H1 (cell line): ENCODE measurements at regions of chr15 and their contacts with region 1.

Region 1: DNA sequence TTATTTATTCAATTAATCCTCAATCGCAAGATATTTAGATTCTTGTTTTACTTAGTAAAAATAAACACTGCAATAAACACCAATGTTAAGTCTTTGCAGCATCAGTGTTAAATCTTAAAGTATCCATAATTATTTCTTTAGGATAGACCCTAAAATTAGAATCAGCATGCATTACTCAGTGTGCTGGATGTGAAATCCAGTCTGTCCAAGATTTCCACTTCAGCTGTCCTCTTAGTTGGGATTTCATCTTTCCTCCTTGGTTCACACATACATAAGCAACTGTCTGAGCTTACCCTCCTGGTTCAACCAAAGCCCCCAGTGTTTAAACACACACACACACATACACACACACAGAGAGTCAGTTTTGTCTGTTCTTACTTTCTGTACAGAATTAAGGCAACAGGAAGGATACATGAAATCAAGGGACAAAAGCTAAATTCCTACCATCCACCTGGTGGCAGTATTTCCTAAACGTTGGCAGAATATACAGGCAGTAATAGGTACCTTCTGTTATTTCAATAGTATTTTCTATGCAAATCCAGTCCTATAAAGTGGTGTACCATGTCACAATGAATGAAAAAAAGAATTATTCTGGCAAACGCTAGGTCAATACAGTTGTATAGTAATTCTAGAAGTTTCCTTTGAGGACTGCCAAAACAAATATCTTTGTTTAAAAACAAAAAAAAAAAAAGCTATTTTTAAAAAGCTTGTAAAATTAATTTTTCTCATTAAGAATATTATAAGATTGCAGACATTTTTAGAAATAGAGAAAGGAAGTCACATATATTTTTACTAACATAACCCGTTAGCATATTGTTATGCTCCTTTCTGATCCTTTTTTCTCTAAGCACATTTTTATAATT is 27.3 kb upstream of the DMXL2 start:
- DNase-seq: no peak
- H3K4me3 ChIP-seq: no peak overlapping the region
- H3K27ac ChIP-seq: no peak overlapping the region
- H3K4me1 ChIP-seq: no peaks in the 10 kb centered on the region
- H3K27me3 ChIP-seq: no peaks in the 10 kb centered on the region
- CTCF ChIP-seq: peak in 2 of 3 experiments; percentile 70 to 75; a peak in 3 of 4 replicates
- EP300 ChIP-seq: no peak
- POLR2A ChIP-seq: no peak
- RAD21 ChIP-seq: peak; percentile 93 to 95

Region 2: DNA sequence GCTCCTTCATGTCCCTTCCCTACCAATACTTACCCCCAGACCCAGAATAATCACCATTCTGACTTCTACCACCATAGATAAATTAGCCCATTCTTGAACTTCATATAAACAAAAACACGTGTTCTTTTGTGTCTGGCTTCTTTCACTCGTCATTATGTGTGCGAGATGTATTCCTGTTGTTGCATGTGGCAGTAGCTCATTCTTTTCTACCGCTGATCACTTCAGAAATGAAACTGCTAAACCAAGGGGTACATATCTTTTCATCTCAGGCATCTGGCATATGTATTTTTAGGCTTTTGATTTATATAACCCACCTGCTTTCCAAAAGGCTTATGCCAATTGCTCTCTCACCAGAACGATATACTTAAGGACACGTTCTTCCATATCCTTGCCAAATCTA is 17.6 kb after region 1 on chr15:
- CTCF ChIA-PET with region 1: interaction called, 15 read pairs
- POLR2A ChIA-PET with region 1: no interaction called
- DNase-seq: no peak
- H3K4me3 ChIP-seq: no peak overlapping the region
- H3K27ac ChIP-seq: no peak overlapping the region
- H3K4me1 ChIP-seq: peaks cover 0 to 3% (median 0%) of the 10 kb centered on the region in 4 experiments; a peak in 1 of 7 replicates
- H3K27me3 ChIP-seq: no peaks in the 10 kb centered on the region
- CTCF ChIP-seq: no peak
- EP300 ChIP-seq: no peak
- POLR2A ChIP-seq: no peak
- RAD21 ChIP-seq: no peak

Region 3: GRCh38 chr15:51681303-51681963 is 31.5 kb after region 1 on chr15 and contains the start of gene SCG3:
- CTCF ChIA-PET with region 1: interaction called, 15 read pairs
- POLR2A ChIA-PET with region 1: no interaction called
- DNase-seq: peak; percentile 94 to 99
- H3K4me3 ChIP-seq: peak within 1 kb of the TSS; percentile 59 to 91 (median 80)
- H3K27ac ChIP-seq: 0 out of 2 replicates have a peak within 1 kb of the TSS, but pooled peaks have one; percentile 55
- H3K4me1 ChIP-seq: no peaks in the 10 kb centered on the region
- H3K27me3 ChIP-seq: no peaks in the 10 kb centered on the region
- CTCF ChIP-seq: no peak
- EP300 ChIP-seq: 0 out of 3 replicates have a peak, but pooled peaks of 1 of the 2 experiments have one; percentile 50
- POLR2A ChIP-seq: peak; percentile 50 to 85
- RAD21 ChIP-seq: peak in 1 of 2 experiments; percentile 1; a peak in 2 of 4 replicates
- total RNA-seq, gene SCG3: 42.4 and 45.9 TPM in 2 replicates

Region 4: DNA sequence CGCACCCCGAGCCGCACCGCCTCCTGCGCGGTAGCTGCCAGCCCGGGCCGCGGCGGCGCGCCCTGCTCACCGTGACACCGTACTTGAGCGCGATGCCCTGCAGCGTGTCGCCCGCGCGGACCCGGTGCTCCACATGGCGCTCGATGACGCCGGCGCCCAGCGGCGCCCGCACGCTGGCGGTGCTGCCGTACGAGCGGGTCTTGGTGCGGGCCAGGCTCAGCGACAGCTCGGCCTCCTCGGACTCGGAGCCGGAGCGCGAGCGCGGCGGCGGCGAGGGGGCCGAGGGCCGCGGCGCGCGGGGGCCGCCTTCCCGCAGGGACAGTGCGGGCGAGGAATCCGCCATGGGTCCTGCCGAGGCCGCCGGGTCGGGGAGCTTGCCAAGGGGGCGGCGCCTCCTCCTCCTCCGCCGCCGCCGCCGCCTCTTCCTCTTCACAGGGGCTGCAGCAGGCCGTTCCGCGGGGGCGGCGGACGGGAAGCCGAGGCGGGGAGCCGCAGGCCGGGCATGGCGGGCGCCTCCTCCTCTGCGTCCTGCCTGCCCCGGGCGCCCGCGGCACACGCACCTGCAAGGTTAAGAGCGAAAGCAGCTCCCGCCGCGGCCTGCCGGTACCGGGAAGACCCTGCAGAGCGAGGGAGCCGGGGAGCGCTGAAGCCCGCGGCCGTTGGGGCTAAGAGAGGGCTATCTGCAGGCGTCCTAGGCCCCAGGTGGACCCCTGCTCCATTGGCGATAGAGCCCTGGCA is 87.6 kb after region 1 on chr15 and contains the start of gene LYSMD2:
- CTCF ChIA-PET with region 1: interaction called, 14 read pairs
- POLR2A ChIA-PET with region 1: interaction called, 5 read pairs
- DNase-seq: peak in 1 of 2 experiments; percentile 68
- H3K4me3 ChIP-seq: peak within 1 kb of the TSS; percentile 55 to 66 (median 58)
- H3K27ac ChIP-seq: no peak within 1 kb of the TSS
- H3K4me1 ChIP-seq: peaks cover 0 to 4% (median 0%) of the 10 kb centered on the region in 4 experiments; a peak in 1 of 7 replicates
- H3K27me3 ChIP-seq: peaks cover 6 to 32% (median 19%) of the 10 kb centered on the region in 4 experiments
- CTCF ChIP-seq: no peak
- EP300 ChIP-seq: no peak
- POLR2A ChIP-seq: no peak; a peak in 1 of 3 replicates
- RAD21 ChIP-seq: 0 out of 4 replicates have a peak, but pooled peaks of 1 of the 2 experiments have one; percentile 1
- total RNA-seq, gene LYSMD2: 2.7 and 3.2 TPM in 2 replicates

Region 5: DNA sequence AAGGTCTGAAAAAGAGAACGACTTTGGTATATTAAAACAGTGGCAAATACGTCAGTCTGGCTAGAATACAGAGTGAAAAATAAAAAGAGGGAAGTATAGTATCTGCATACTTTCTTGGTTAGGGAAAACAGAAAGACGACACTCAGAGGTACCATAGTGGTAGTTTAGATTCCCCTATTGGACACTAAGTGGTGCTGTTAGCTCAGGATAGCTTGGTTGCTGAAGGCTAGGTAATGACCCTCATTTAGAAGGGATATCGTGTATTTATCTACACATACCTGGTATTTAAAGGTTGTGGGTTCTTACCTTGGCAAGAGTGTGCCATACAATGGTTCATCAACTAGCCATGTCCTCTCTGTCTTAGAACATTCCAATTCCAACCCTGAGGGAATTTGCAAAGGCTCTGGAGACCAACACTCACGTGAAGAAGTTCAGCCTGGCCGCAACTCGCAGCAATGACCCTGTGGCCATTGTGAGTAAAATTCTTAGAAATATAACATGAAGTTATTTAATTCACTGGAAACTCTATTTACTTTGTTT is 132.5 kb after region 1 on chr15:
- CTCF ChIA-PET with region 1: interaction called, 243 read pairs
- POLR2A ChIA-PET with region 1: interaction called, 7 read pairs
- DNase-seq: no peak
- H3K4me3 ChIP-seq: no peak overlapping the region
- H3K27ac ChIP-seq: no peak overlapping the region
- H3K4me1 ChIP-seq: peaks cover 0 to 6% (median 0%) of the 10 kb centered on the region in 4 experiments; a peak in 2 of 7 replicates
- H3K27me3 ChIP-seq: no peaks in the 10 kb centered on the region
- CTCF ChIP-seq: peak in 2 of 3 experiments; percentile 80 to 84; a peak in 3 of 4 replicates
- EP300 ChIP-seq: no peak
- POLR2A ChIP-seq: no peak
- RAD21 ChIP-seq: peak; percentile 93 to 94